Cardiac septum (tissue), 1 donor: ENCODE measurements at regions of chr17 and their contacts with region 1.

Region 1: DNA sequence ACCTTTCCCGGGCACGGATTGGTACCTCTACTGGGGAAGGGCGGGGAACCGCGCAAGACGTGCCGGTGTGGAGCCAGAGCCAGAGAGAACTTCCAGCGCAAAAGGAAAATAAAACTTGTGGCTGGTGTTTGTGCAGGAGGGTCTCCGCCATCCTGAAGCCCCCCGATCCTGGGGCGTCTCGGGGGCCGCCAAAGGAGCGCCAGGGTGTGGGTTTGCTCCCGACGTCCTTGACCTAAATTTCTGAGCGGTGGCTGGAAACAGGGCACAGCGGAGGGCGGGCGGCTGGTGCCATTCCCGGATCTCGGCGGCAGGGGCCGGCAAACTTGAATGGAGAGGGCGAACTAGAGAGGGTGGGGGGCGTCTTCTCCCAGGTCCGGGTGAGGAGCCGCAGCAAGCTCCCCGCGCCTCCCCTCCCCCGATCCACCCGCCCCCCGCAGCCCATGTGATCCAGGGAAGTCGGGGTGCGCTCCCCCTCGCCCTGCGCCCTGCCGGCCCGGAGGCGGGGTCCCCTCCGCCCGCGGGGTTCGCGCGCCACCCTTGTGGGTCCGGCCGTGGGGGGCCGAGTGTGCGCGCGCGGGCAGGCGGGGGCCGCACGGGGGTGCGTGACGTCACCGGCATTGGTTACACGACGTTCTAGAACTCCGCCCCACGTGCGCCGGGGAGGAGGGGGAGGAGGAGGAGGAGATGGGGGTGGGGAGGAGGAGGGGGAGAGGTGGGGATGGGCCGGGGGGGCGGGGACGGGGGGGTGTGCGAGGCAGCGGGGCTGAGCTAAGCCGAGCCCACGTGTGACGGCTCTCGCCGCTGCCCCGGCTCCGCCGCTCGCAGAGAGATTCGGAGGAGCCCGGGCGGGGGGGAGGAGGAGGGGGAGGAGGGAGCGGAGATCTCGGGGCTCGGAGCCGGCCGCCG is at the start of gene MSI2:
- DNase-seq: peak; percentile 94
- total RNA-seq, gene MSI2: 112 TPM

Region 2: DNA sequence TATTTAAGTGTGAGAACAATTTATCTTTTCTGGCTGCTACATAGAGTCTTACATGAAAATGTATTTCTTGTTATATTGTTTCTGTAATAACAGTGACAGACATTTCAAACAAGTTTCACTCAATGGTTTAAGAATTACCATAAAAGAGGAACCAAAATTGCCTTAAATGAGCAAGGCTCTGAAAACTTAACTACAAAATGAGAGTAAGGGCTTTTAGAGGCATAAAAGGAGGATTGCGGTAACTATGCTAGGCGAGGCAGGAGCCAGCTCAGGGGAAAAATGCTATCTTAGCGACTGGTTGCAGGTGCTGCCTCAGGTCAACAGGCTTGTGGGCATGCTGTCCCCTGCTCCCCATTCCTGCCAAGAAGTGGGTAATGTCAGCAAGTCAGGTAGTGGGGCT is 81.4 kb before region 1 on chr17:
- intact Hi-C with region 1: no loop called
- DNase-seq: no peak

Region 3: DNA sequence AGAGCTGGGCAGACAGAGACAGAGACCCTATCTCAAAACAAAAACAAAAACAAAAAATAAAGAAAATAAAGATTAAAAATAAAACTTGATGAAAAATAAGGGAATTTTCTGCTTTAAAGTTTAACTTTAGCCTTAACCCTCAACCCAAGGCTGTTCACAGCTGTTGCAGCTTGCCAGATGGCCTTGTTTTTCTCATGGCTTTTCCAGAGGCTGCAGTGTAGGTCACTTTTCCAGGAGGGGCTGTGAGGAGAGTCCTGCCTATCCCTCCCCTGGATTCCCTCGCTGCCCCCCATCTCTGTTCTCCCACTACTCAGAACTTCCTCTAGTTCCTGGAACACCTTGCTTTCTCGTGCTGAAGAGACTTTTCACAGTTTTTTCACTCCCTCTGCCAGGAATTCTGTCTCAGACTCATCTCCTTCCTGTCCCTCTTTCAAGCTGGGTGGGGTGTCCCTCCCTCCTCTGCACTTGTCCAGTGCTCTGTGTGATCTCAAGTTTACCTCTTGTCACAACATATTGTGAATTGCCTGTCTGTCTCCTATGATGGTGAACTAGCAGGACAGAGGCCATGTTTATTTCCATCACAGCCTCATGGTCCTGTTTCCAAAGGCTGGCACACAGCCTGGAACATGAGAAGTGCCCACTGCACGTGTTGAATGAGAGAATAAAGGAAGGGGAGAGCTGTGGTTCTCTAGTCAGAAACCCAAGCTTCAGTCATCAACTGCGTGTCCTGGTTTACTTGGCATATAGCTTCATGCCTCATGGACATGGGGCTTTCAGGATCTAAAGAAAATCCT is 69.6 kb before region 1 on chr17:
- intact Hi-C with region 1: no loop called
- DNase-seq: no peak

Region 4: DNA sequence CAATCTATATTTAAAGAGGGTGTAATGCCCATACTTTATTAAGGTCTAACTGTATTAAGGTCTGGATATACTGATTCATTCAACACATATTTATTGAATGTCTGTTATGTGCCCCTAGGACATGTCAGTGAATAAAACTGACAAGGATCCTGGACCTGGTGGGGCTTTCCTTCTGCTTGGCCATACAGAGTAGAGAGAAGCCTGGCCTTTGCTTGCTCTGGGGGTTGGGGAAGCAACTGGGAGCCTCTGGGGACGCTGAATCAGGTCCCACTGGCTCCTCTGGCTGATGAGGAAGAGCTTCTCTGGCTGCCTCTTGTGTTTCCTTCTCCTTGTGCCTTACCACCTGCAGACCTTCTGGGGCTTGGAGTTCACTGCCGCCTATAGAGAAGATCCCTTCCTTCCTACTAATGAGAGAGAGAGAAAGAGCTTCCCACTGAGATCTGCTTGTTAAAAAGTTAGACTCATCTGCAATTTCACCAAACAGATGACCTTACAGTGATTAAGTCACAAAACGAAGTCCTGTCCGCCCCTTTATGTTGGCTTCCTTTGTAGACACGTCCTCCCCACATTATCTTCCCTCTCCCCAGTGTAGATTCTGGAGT is 50.0 kb after region 1 on chr17:
- intact Hi-C with region 1: no loop called
- DNase-seq: no peak

Region 5: DNA sequence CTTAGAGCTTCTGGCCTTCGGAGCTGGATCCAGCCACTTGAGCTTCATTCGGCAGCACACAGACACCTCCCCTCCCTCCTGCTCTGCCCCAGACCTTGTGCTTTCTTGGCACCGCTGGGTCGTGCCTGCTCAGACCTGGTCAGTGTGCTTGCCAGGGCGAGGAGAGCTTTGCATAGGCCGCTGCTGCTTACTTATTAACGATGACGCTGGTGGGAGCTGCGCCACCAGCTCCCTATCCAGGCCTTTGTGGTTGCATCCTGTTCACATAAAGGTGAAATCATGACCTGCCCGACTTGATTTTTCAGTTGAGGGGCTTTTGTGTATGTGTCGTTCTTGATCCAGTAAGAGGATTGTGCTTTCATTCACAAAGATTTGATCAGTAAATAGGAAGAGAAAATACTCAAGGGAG is 101.4 kb after region 1 on chr17:
- intact Hi-C with region 1: loop called (anchors 5 kb)
- DNase-seq: no peak

Region 6: DNA sequence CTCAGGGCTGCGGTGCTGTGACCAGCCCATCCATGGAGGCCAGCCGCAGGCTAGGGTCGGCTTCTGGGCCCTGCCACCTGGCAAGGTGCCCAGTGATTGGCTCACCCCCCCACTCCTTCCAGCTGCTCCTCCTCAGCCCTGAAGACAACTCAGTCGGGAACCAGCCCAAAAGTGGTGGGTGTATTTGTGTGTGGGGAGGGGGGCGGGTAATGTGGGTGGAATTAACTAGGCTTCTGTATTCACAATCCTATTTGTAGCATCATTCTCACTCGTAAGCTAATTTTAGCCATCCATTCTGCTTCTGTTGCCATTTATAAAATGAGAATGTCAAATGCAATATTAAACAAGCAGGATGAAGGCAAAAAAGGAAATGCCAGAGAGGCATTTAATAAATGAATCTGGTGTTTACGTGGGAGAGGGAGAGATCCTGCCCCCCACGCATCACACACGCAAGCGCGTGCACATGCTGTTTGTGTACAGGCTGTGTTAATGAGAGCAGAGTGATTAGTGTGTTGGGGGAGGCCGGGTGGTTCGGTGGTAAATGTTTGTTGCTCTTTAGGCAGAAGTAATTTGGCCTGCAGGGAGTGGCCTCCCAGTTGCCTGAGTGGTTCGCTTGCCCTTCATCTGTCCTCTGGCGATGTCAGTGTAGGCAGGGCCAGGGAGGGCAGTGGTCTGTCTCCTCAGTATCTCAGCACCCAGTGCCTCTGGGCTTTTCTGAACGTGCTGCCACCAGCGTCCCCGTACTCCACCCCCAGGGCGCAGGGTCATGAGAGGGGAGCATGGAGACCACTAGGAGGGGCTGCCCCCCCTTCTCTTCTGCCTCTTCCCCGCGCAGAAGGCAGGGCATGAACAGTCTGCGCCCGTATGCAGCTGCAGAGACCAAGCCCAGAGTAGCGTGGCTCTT is 349.0 kb after region 1 on chr17:
- intact Hi-C with region 1: loop called (anchors 10 kb)
- DNase-seq: peak; percentile 80